Activated naive CD4-positive, alpha-beta T cell treated with anti-CD3 and anti-CD28 coated beads for 36 hours (primary cell): ENCODE measurements at regions of chr1 and their contacts with region 1.

Region 1: DNA sequence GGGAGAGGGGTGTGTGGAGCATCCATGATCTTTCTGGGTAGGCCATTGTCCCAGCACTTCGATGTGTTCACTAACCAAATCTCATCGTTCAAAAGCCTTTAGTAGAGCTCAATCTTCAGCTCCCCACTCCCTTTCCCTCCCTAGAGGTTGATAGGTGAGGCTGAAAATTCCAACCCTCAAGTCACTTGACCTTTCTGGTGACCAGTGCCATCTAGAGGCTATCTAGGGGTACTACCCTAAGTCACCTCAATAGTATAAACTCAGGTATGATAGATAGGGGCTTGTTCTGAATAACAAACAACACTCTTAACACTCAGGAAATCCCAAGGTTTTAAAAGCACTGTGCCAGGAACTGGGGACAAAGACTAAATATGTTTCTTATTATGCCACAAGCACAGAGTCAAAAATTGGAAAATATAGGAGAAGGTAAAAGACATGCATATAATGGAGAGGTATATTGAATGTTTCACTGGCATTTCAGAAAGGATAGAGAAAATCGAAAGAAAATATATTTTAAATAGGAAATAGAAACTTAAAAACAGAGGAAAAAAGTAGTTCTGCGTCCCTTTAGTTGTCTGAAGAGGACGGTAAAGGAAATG is 42.9 kb upstream of the CD53 start:
- DNase-seq: peak; percentile 36
- H3K4me3 Mint-ChIP-seq: no peak overlapping the region
- H3K27ac Mint-ChIP-seq: no peak overlapping the region
- H3K4me1 Mint-ChIP-seq: peaks cover 8% of the 10 kb centered on the region
- H3K27me3 Mint-ChIP-seq: no peaks in the 10 kb centered on the region

Region 2: DNA sequence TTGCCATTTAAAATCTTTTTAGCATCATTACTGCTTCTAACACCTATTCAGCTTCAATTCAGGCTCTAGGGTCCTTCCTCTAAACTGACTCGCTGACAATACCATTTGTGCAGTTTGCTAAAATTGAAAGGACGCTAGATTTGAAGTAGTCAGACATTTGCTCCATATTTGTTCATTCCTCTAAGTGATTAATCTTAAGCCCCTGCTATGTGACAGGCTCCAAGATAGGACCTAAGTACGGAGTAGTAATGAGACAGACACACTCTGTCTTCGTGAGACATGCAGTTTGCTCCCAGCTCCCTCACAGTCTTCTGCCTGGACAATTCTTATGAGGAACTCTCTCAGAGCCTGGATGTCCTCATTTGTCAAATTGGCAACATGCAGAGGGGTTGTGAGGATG is 16.8 kb after region 1 on chr1:
- CTCF ChIA-PET with region 1: interaction called, 8 read pairs
- intact Hi-C with region 1: loop called (anchors 1 kb)
- DNase-seq: no peak
- H3K4me3 Mint-ChIP-seq: no peak overlapping the region
- H3K27ac Mint-ChIP-seq: no peak overlapping the region
- H3K4me1 Mint-ChIP-seq: no peaks in the 10 kb centered on the region
- H3K27me3 Mint-ChIP-seq: no peaks in the 10 kb centered on the region